Heart left ventricle (tissue), 16 donors: ENCODE measurements at regions of chr4 and their contacts with region 1.

Region 1: GRCh38 chr4:56799824-56800756 is 21.4 kb downstream of the SPINK2 start:
- DNase-seq: peak; percentile 80 to 89 (median 84)
- ATAC-seq: peak; percentile 91 to 99 (median 98)
- H3K4me3 ChIP-seq: peak overlapping the region; percentile 42 to 86 (median 63)
- H3K27ac ChIP-seq: peak overlapping the region in 11 of 12 donors; percentile 6 to 75 (median 60)
- H3K4me1 ChIP-seq: peaks cover 0 to 6% (median 0%) of the 10 kb centered on the region in 12 donors
- H3K27me3 ChIP-seq: no peaks in the 10 kb centered on the region
- CTCF ChIP-seq: peak; percentile 79 to 97 (median 89)
- POLR2A ChIP-seq: no peak

Region 2: DNA sequence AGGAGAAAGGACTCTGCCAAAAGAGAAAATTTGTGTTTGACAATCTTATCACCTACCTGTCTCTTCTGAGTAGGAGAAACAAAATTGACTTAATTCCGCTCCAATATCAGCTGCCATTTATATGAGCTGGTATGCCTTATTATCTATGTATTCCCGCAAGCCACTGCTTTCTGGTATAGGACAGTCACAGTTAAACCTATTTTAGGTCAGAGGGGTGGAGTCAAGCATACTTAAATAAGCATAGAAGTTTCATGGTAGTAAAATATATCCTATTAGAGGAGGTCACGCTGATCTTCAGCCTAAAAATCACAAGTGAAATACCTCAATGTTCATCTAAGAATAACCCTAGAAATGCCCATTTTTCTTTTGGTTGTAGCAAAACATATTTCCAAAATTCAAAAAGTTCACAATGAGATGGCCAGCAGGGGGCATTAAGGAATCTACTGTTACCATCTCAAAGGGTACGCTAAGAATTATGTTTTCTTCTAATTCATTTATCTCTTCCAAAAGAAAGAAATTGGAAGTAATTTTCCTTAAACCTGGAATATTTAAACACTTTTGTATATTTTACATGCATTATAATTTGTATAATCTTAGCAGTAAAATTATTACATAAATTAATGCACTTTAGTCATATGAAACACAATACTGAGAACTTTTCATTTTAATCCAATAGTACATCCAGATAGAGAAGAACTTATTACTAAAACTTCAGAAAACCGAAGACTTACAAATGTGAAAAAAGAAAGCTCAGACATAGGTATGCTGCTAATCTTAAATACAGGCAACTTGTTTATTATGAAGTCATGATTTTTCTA is 375.2 kb before region 1 on chr4:
- intact Hi-C with region 1: loop called in 3 of 10 experiments (anchors 2 to 10 kb)
- DNase-seq: no peak
- ATAC-seq: peak in 2 of 4 donors; percentile 50 to 65
- H3K4me3 ChIP-seq: peak overlapping the region in 8 of 12 donors; percentile 0 to 39 (median 28)
- H3K27ac ChIP-seq: no peak overlapping the region
- H3K4me1 ChIP-seq: peaks cover 0 to 3% (median 0%) of the 10 kb centered on the region in 12 donors
- H3K27me3 ChIP-seq: no peaks in the 10 kb centered on the region
- CTCF ChIP-seq: peak; percentile 47 to 78 (median 64)
- POLR2A ChIP-seq: no peak

Region 3: DNA sequence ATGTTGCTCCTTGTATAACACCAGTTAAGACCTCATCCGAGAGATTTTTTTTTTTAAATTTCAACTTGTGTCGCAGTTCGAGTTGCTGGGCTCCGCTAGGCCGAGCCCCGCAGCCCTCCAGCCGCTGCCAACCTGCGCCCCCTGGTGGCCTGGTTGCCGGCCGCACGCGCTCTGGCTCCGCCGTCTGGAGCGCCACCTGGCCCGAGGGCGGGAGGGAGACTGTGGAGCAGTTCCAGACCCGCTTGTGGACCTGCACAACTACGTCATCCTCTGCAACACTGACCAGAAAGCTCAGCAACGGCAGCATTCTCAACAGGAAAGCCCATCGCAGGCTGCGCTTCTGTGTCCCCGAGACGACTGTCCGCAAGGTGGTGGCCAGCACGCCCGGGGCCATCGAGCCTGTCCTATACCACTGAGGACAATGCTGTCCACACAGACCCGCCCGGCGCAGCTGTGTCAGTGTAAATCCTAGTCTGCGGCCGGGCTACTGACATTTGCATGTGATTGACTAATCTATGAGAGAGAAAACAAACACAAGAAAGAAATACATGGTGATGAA is 255.4 kb before region 1 on chr4:
- intact Hi-C with region 1: loop called in 1 of 10 experiments (anchors 10 kb)
- DNase-seq: peak; percentile 79 to 92 (median 85)
- ATAC-seq: peak; percentile 85 to 99 (median 99)
- H3K4me3 ChIP-seq: peak overlapping the region in 10 of 12 donors; percentile 12 to 53 (median 41)
- H3K27ac ChIP-seq: no peak overlapping the region
- H3K4me1 ChIP-seq: peaks cover 0 to 7% (median 0%) of the 10 kb centered on the region in 12 donors
- H3K27me3 ChIP-seq: peaks cover 0 to 16% (median 0%) of the 10 kb centered on the region in 9 donors
- CTCF ChIP-seq: peak; percentile 96 to 100 (median 98)
- POLR2A ChIP-seq: no peak

Region 4: GRCh38 chr4:56668298-56668697 is 131.8 kb before region 1 on chr4:
- intact Hi-C with region 1: loop called in 4 of 10 experiments (anchors 5 to 10 kb)
- DNase-seq: no peak
- ATAC-seq: no peak
- H3K4me3 ChIP-seq: no peak overlapping the region
- H3K27ac ChIP-seq: no peak overlapping the region
- H3K4me1 ChIP-seq: no peaks in the 10 kb centered on the region
- H3K27me3 ChIP-seq: peaks cover 0 to 16% (median 0%) of the 10 kb centered on the region in 9 donors
- CTCF ChIP-seq: peak in 6 of 12 donors; percentile 12 to 30 (median 24)
- POLR2A ChIP-seq: no peak